ENCODE measurements at regions of chr11 and their contacts with region 1.

Region 1: DNA sequence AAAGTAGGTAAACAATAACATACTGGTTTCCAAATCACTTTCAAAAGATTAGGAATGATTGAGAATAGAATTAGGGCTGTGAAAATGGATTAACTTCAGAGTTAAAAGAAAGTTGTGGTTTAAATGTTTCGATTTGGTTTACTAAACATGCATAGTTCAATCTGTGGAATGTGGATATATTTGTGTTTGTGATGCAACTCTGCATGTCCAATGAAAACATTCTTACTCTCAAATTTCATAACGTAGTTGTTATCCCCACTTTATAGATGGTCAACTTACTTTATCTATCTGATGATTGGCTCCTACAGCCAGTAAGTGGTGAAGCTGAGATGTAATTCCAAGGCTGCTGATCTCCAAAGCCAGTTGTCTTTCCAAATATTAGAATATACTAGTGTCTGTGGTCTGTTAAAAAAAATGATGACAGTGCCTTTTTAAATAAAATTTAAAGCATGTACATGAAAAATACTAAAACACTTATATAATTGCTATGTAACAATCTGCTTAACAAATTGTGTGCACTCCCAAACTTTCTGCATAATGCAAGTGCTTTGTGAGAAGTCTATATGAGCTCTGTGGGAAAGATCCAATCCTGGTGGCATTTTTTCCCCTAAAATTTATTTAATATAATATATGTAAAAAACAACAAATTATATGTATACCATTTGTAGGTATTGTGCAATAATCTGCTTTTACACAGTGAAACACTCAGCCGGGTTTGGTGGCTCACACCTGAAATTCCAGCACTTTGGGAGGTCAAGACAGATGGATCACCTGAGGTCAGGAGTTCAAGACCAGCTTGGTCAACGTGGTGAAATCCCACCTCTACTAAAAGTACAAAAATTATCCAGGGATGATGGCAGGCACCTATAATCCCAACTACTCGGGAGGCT is 9.7 kb upstream of the SIK3 start:
- DNase-seq: no peak
- H3K4me3 ChIP-seq: no peak overlapping the region
- H3K4me3 Mint-ChIP-seq: no peak overlapping the region
- H3K27ac ChIP-seq: no peak overlapping the region
- H3K27ac Mint-ChIP-seq: no peak overlapping the region
- H3K4me1 ChIP-seq: no peaks in the 10 kb centered on the region
- H3K4me1 Mint-ChIP-seq: peaks cover 0 to 5% (median 4%) of the 10 kb centered on the region in 4 donors
- H3K27me3 ChIP-seq: no peaks in the 10 kb centered on the region
- H3K27me3 Mint-ChIP-seq: no peaks in the 10 kb centered on the region

Region 2: DNA sequence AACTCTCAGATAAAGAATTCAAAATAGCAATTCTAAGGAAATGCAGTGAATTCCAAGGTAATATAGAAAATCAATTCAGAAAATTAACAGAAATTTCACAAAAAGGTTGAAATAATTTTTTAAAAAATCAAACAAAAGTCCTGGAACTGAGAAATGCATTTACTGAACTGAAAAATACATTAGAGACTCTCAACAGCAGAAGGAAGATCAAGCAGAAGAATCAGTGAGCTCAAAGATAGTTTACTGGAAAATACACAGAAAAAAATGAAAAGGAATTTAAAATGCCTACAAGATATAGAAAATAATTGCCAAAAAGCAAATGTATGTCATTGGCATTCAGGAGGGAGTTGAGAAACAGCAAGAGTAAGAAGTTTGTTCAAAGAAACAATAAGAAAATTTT is 442.4 kb before region 1 on chr11:
- CTCF ChIA-PET with region 1: no interaction called
- POLR2A ChIA-PET with region 1: no interaction called
- intact Hi-C with region 1: no loop called
- DNase-seq: no peak
- H3K4me3 ChIP-seq: no peak overlapping the region
- H3K4me3 Mint-ChIP-seq: no peak overlapping the region
- H3K27ac ChIP-seq: no peak overlapping the region
- H3K27ac Mint-ChIP-seq: no peak overlapping the region
- H3K4me1 ChIP-seq: no peaks in the 10 kb centered on the region
- H3K4me1 Mint-ChIP-seq: no peaks in the 10 kb centered on the region
- H3K27me3 ChIP-seq: no peaks in the 10 kb centered on the region
- H3K27me3 Mint-ChIP-seq: peaks cover 31 to 43% of the 10 kb centered on the region in 2 donors

Region 3: GRCh38 chr11:116732271-116733042 is 375.5 kb before region 1 on chr11:
- CTCF ChIA-PET with region 1: interaction called, 51 read pairs
- POLR2A ChIA-PET with region 1: interaction called, 3 read pairs
- intact Hi-C with region 1: no loop called
- DNase-seq: peak in 4 of 5 donors; percentile 41 to 50 (median 44)
- H3K4me3 ChIP-seq: no peak overlapping the region
- H3K4me3 Mint-ChIP-seq: peak overlapping the region in 1 of 8 donors; percentile 51
- H3K27ac ChIP-seq: no peak overlapping the region
- H3K27ac Mint-ChIP-seq: no peak overlapping the region
- H3K4me1 ChIP-seq: peaks cover 8% of the 10 kb centered on the region
- H3K4me1 Mint-ChIP-seq: peaks cover 4 to 9% (median 7%) of the 10 kb centered on the region in 4 donors
- H3K27me3 ChIP-seq: no peaks in the 10 kb centered on the region
- H3K27me3 Mint-ChIP-seq: peaks cover 2 to 8% of the 10 kb centered on the region in 2 donors

Region 4: GRCh38 chr11:116787786-116788486 is 320.0 kb before region 1 on chr11 and contains the start of gene ZPR1:
- CTCF ChIA-PET with region 1: interaction called, 212 read pairs
- POLR2A ChIA-PET with region 1: interaction called, 13 read pairs
- intact Hi-C with region 1: loop called (anchors 1 kb)
- DNase-seq: peak; percentile 86 to 89 (median 86)
- H3K4me3 ChIP-seq: peak within 1 kb of the TSS; percentile 55 to 90
- H3K4me3 Mint-ChIP-seq: peak within 1 kb of the TSS; percentile 91 to 98 (median 97)
- H3K27ac ChIP-seq: peak within 1 kb of the TSS; percentile 84
- H3K27ac Mint-ChIP-seq: peak within 1 kb of the TSS; percentile 96 to 99 (median 98)
- H3K4me1 ChIP-seq: peaks cover 40% of the 10 kb centered on the region
- H3K4me1 Mint-ChIP-seq: peaks cover 30 to 66% (median 45%) of the 10 kb centered on the region in 4 donors
- H3K27me3 ChIP-seq: no peaks in the 10 kb centered on the region
- H3K27me3 Mint-ChIP-seq: peaks cover 0 to 2% of the 10 kb centered on the region in 2 donors
- total RNA-seq, gene ZPR1: 59.5 to 73.4 TPM

Region 5: DNA sequence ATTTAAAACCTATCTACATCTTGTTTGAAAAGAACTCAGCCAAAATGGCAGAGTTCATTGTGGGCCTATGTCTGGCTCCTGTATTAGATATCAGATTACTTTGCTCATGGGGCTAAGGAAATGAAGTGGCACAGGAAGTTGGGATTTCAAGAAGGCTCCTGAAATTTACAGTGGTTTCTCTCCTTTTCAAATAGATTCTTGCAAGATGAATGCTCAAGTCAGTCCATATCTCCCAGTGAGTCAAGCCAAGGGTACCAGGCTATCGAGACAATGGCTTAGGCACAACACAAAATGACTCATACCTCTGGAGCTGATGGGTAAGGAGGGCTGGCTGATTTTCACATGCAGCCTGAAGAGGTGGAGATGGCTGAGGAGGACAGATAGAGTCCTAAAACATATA is 246.4 kb before region 1 on chr11:
- CTCF ChIA-PET with region 1: interaction called, 11 read pairs
- POLR2A ChIA-PET with region 1: interaction called, 3 read pairs
- intact Hi-C with region 1: no loop called
- DNase-seq: no peak
- H3K4me3 ChIP-seq: no peak overlapping the region
- H3K4me3 Mint-ChIP-seq: no peak overlapping the region
- H3K27ac ChIP-seq: no peak overlapping the region
- H3K27ac Mint-ChIP-seq: peak overlapping the region in 6 of 7 donors; percentile 45 to 83 (median 67)
- H3K4me1 ChIP-seq: peaks cover 7% of the 10 kb centered on the region
- H3K4me1 Mint-ChIP-seq: peaks cover 7 to 21% (median 11%) of the 10 kb centered on the region in 4 donors
- H3K27me3 ChIP-seq: no peaks in the 10 kb centered on the region
- H3K27me3 Mint-ChIP-seq: no peaks in the 10 kb centered on the region

Region 6: GRCh38 chr11:116895048-116895757 is 212.7 kb before region 1 on chr11:
- CTCF ChIA-PET with region 1: interaction called, 26 read pairs
- POLR2A ChIA-PET with region 1: no interaction called
- intact Hi-C with region 1: loop called (anchors 1 kb)
- DNase-seq: peak in 1 of 5 donors; percentile 7
- H3K4me3 ChIP-seq: no peak overlapping the region
- H3K4me3 Mint-ChIP-seq: no peak overlapping the region
- H3K27ac ChIP-seq: no peak overlapping the region
- H3K27ac Mint-ChIP-seq: peak overlapping the region; percentile 22 to 91 (median 67)
- H3K4me1 ChIP-seq: peaks cover 10% of the 10 kb centered on the region
- H3K4me1 Mint-ChIP-seq: peaks cover 18 to 35% (median 27%) of the 10 kb centered on the region in 4 donors
- H3K27me3 ChIP-seq: no peaks in the 10 kb centered on the region
- H3K27me3 Mint-ChIP-seq: no peaks in the 10 kb centered on the region

Region 7: GRCh38 chr11:117226388-117227385 is 118.7 kb after region 1 on chr11:
- CTCF ChIA-PET with region 1: interaction called, 8 read pairs
- POLR2A ChIA-PET with region 1: interaction called, 3 read pairs
- intact Hi-C with region 1: loop called (anchors 1 kb)
- DNase-seq: peak; percentile 66 to 72 (median 68)
- H3K4me3 ChIP-seq: no peak overlapping the region
- H3K4me3 Mint-ChIP-seq: peak overlapping the region in 3 of 8 donors; percentile 21 to 66 (median 25)
- H3K27ac ChIP-seq: peak overlapping the region; percentile 7
- H3K27ac Mint-ChIP-seq: peak overlapping the region; percentile 80 to 94 (median 84)
- H3K4me1 ChIP-seq: peaks cover 46% of the 10 kb centered on the region
- H3K4me1 Mint-ChIP-seq: peaks cover 27 to 60% (median 39%) of the 10 kb centered on the region in 4 donors
- H3K27me3 ChIP-seq: no peaks in the 10 kb centered on the region
- H3K27me3 Mint-ChIP-seq: no peaks in the 10 kb centered on the region

Region 8: GRCh38 chr11:118359295-118359958 is 1251.5 kb after region 1 on chr11 and contains the start of gene UBE4A:
- CTCF ChIA-PET with region 1: no interaction called
- POLR2A ChIA-PET with region 1: no interaction called
- intact Hi-C with region 1: no loop called
- DNase-seq: peak; percentile 94 to 95 (median 95)
- H3K4me3 ChIP-seq: peak within 1 kb of the TSS; percentile 82 to 83
- H3K4me3 Mint-ChIP-seq: peak within 1 kb of the TSS; percentile 93 to 100 (median 98)
- H3K27ac ChIP-seq: peak within 1 kb of the TSS; percentile 91
- H3K27ac Mint-ChIP-seq: peak within 1 kb of the TSS; percentile 95 to 100 (median 98)
- H3K4me1 ChIP-seq: peaks cover 44% of the 10 kb centered on the region
- H3K4me1 Mint-ChIP-seq: peaks cover 28 to 54% (median 45%) of the 10 kb centered on the region in 4 donors
- H3K27me3 ChIP-seq: no peaks in the 10 kb centered on the region
- H3K27me3 Mint-ChIP-seq: no peaks in the 10 kb centered on the region
- total RNA-seq, gene UBE4A: 50.3 to 52.2 TPM